ENCODE measurements at regions of chr6 and their contacts with region 1.

Region 1: GRCh38 chr6:89371849-89372505 is 19.5 kb upstream of the UBE2J1 start:
- DNase-seq: peak; percentile 61
- H3K4me3 Mint-ChIP-seq: no peak overlapping the region
- H3K27ac Mint-ChIP-seq: no peak overlapping the region
- H3K4me1 Mint-ChIP-seq: no peaks in the 10 kb centered on the region
- H3K27me3 Mint-ChIP-seq: no peaks in the 10 kb centered on the region
- CTCF ChIP-seq: peak; percentile 81

Region 2: GRCh38 chr6:88933521-88933920 is 438.5 kb before region 1 on chr6:
- CTCF ChIA-PET with region 1: no interaction called
- POLR2A ChIA-PET with region 1: no interaction called
- intact Hi-C with region 1: no loop called
- DNase-seq: no peak
- H3K4me3 Mint-ChIP-seq: no peak overlapping the region
- H3K27ac Mint-ChIP-seq: no peak overlapping the region
- H3K4me1 Mint-ChIP-seq: no peaks in the 10 kb centered on the region
- H3K27me3 Mint-ChIP-seq: no peaks in the 10 kb centered on the region
- CTCF ChIP-seq: no peak

Region 3: GRCh38 chr6:89122625-89123024 is 249.4 kb before region 1 on chr6:
- CTCF ChIA-PET with region 1: interaction called, 12 read pairs
- POLR2A ChIA-PET with region 1: no interaction called
- intact Hi-C with region 1: loop called (anchors 1 kb)
- DNase-seq: peak; percentile 48
- H3K4me3 Mint-ChIP-seq: no peak overlapping the region
- H3K27ac Mint-ChIP-seq: no peak overlapping the region
- H3K4me1 Mint-ChIP-seq: no peaks in the 10 kb centered on the region
- H3K27me3 Mint-ChIP-seq: no peaks in the 10 kb centered on the region
- CTCF ChIP-seq: peak; percentile 70

Region 4: GRCh38 chr6:89360415-89360999 is 11.5 kb before region 1 on chr6:
- CTCF ChIA-PET with region 1: interaction called, 57 read pairs
- POLR2A ChIA-PET with region 1: interaction called, 4 read pairs
- intact Hi-C with region 1: no loop called
- DNase-seq: peak; percentile 35
- H3K4me3 Mint-ChIP-seq: no peak overlapping the region
- H3K27ac Mint-ChIP-seq: no peak overlapping the region
- H3K4me1 Mint-ChIP-seq: no peaks in the 10 kb centered on the region
- H3K27me3 Mint-ChIP-seq: no peaks in the 10 kb centered on the region
- CTCF ChIP-seq: no peak

Region 5: DNA sequence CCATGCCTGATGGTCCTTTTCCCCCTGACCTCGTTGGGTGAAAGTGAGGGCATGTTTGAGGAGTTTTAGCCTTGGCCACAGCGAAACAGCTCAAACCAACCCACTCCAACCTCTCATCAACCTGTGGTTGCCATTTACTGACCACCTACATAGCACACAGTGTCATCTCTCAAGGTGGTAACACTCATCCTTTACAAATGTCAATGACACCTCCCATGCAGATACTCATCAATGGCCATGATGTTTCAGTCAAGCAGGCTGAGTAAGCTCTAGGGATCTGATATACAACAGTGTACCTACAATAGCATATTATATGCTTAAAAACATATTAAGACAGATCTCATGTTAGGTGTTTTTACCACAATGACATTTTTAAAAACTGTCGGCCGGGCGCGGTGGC is 30.8 kb after region 1 on chr6:
- CTCF ChIA-PET with region 1: interaction called, 10 read pairs
- POLR2A ChIA-PET with region 1: interaction called, 3 read pairs
- intact Hi-C with region 1: no loop called
- DNase-seq: no peak
- H3K4me3 Mint-ChIP-seq: no peak overlapping the region
- H3K27ac Mint-ChIP-seq: no peak overlapping the region
- H3K4me1 Mint-ChIP-seq: no peaks in the 10 kb centered on the region
- H3K27me3 Mint-ChIP-seq: peaks cover 33% of the 10 kb centered on the region
- CTCF ChIP-seq: no peak

Region 6: DNA sequence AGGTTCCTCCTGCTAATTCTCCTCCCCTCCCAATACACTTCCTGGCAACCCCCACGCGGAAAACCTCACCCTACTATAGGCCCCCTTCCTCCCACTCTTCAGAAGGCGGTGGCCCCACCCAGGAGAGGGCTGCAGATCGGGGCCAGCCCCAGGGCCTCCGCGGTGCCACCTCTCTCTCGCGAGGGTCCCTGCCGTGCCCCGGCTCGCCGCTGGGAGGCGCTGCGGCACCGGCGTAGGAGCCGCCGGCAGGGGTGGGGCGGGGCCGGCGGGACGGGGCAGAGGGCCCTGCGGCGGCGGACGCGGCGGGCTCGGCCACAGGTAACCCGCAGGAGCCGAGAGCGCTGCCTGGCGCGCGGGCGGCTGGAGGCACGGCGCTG is 60.9 kb after region 1 on chr6 and contains the start of gene ANKRD6:
- CTCF ChIA-PET with region 1: interaction called, 10 read pairs
- POLR2A ChIA-PET with region 1: no interaction called
- intact Hi-C with region 1: no loop called
- DNase-seq: peak; percentile 65
- H3K4me3 Mint-ChIP-seq: peak within 1 kb of the TSS; percentile 68
- H3K27ac Mint-ChIP-seq: no peak within 1 kb of the TSS
- H3K4me1 Mint-ChIP-seq: no peaks in the 10 kb centered on the region
- H3K27me3 Mint-ChIP-seq: peaks cover 42% of the 10 kb centered on the region
- CTCF ChIP-seq: peak; percentile 94
- total RNA-seq, gene ANKRD6: 1.0 and 2.1 TPM in 2 replicates

Region 7: GRCh38 chr6:89509766-89510281 is 137.8 kb after region 1 on chr6:
- CTCF ChIA-PET with region 1: no interaction called
- POLR2A ChIA-PET with region 1: no interaction called
- intact Hi-C with region 1: no loop called
- DNase-seq: peak; percentile 20
- H3K4me3 Mint-ChIP-seq: no peak overlapping the region
- H3K27ac Mint-ChIP-seq: no peak overlapping the region
- H3K4me1 Mint-ChIP-seq: no peaks in the 10 kb centered on the region
- H3K27me3 Mint-ChIP-seq: peaks cover 2% of the 10 kb centered on the region
- CTCF ChIP-seq: no peak